ENCODE measurements at regions of chr10 and their contacts with region 1.

Region 1: DNA sequence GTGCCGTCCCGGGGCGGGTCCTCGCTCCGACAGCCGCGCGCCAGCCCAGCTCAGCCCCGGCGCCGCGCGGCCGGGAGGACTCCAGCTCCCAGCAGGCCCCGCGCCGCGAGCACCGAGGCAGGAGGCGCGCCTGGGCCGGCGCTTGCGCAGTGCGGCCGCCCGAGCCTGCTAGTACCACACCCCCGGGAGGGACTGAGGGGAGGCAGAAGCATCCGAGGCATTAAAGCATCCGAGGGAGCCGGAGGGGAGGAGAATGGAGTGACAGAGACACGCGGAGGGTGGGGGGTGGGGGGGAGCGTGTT is at the start of gene GRK5:
- DNase-seq: peak; percentile 96
- ATAC-seq: peak; percentile 86 to 91
- H3K4me3 ChIP-seq: peak within 1 kb of the TSS; percentile 66
- H3K27ac ChIP-seq: peak within 1 kb of the TSS; percentile 98 to 99
- H3K4me1 ChIP-seq: peaks cover 33% of the 10 kb centered on the region
- CTCF ChIP-seq: no peak
- EP300 ChIP-seq: no peak
- POLR2A ChIP-seq: peak; percentile 69
- RAD21 ChIP-seq: no peak
- polyA plus RNA-seq, gene GRK5: 5.0 and 5.4 TPM in 2 replicates

Region 2: GRCh38 chr10:118827466-118828155 is 379.7 kb before region 1 on chr10:
- CTCF ChIA-PET with region 1: no interaction called
- POLR2A ChIA-PET with region 1: no interaction called
- DNase-seq: no peak
- ATAC-seq: no peak
- H3K4me3 ChIP-seq: no peak overlapping the region
- H3K27ac ChIP-seq: no peak overlapping the region
- H3K4me1 ChIP-seq: no peaks in the 10 kb centered on the region
- CTCF ChIP-seq: 0 out of 3 replicates have a peak, but pooled peaks have one; percentile 16
- EP300 ChIP-seq: no peak
- POLR2A ChIP-seq: no peak
- RAD21 ChIP-seq: no peak

Region 3: GRCh38 chr10:119103903-119104652 is 103.2 kb before region 1 on chr10 and contains the start of gene DENND10:
- CTCF ChIA-PET with region 1: no interaction called
- POLR2A ChIA-PET with region 1: no interaction called
- DNase-seq: peak; percentile 79 to 86
- ATAC-seq: peak; percentile 86 to 92
- H3K4me3 ChIP-seq: peak within 1 kb of the TSS; percentile 86
- H3K27ac ChIP-seq: peak within 1 kb of the TSS; percentile 88 to 99
- H3K4me1 ChIP-seq: peaks cover 17% of the 10 kb centered on the region; the same call in 2 of the 3 replicates
- CTCF ChIP-seq: no peak
- EP300 ChIP-seq: no peak
- POLR2A ChIP-seq: peak; percentile 98
- RAD21 ChIP-seq: 0 out of 5 replicates have a peak, but pooled peaks of 1 of the 2 experiments have one; percentile 15
- polyA plus RNA-seq, gene DENND10: 88.6 and 94.3 TPM in 2 replicates

Region 4: GRCh38 chr10:119217991-119218490 is 10.7 kb after region 1 on chr10:
- CTCF ChIA-PET with region 1: interaction called, 14 read pairs
- POLR2A ChIA-PET with region 1: no interaction called
- DNase-seq: no peak
- ATAC-seq: no peak
- H3K4me3 ChIP-seq: no peak overlapping the region
- H3K27ac ChIP-seq: no peak overlapping the region
- H3K4me1 ChIP-seq: peaks cover 17% of the 10 kb centered on the region; the same call in 1 of the 3 replicates
- CTCF ChIP-seq: no peak
- EP300 ChIP-seq: no peak
- POLR2A ChIP-seq: no peak
- RAD21 ChIP-seq: no peak

Region 5: GRCh38 chr10:119270762-119271366 is 63.5 kb after region 1 on chr10:
- CTCF ChIA-PET with region 1: interaction called, 20 read pairs
- POLR2A ChIA-PET with region 1: interaction called, 12 read pairs
- DNase-seq: peak; percentile 50 to 72
- ATAC-seq: peak; percentile 87 to 90
- H3K4me3 ChIP-seq: peak overlapping the region; percentile 19; the same call in 1 of the 3 replicates
- H3K27ac ChIP-seq: peak overlapping the region; percentile 76 to 83
- H3K4me1 ChIP-seq: peaks cover 30% of the 10 kb centered on the region
- CTCF ChIP-seq: no peak
- EP300 ChIP-seq: no peak
- POLR2A ChIP-seq: no peak
- RAD21 ChIP-seq: no peak

Region 6: DNA sequence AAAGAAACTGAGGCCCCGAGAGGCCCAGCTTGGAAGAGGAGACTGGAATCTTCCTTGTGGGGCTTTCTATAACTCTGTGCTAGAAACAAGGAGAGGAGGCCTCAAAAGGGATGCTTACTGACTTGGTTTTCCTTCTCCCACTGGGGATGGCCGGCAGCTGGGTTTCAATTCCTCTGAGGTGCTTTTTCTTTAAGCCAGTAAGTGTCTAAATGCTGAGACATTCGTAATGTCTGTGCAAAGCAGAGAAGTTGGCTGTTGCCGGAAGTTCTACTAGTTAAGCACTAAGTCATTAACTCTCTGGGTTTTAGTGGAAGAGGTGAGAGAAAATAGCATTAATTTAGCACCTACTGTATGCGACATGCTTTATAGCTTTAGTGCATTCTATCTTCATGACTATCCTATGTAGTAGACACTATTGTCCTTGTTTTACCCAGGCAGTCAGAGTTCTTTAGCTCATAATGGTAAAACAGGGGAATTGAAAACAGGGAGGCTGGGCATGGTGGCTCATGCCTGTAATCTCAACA is 200.0 kb after region 1 on chr10:
- CTCF ChIA-PET with region 1: interaction called, 23 read pairs
- POLR2A ChIA-PET with region 1: interaction called, 9 read pairs
- DNase-seq: no peak
- ATAC-seq: no peak
- H3K4me3 ChIP-seq: no peak overlapping the region
- H3K27ac ChIP-seq: no peak overlapping the region
- H3K4me1 ChIP-seq: peaks cover 2% of the 10 kb centered on the region
- CTCF ChIP-seq: no peak
- EP300 ChIP-seq: no peak
- POLR2A ChIP-seq: no peak
- RAD21 ChIP-seq: no peak

Region 7: DNA sequence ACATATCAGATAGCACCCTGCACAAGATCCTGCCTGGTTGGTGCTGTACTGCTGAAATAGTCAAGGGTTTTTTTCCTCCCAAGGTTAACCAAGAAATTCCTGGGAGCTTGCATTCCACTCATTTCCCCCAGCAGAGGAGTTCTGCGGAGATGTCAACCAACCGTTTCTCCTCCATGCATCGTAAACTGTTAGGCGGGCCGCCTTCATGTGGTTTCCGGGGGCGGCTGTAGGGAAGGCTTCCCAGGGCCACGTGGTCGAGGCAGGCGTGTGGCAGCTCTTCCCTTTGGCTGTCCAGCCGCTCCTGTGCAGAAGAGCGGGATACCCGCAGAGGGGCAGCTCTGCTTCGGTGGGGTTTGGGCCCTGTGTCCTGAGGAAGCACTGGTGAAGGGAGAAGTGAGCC is 221.5 kb after region 1 on chr10:
- CTCF ChIA-PET with region 1: interaction called, 67 read pairs
- POLR2A ChIA-PET with region 1: no interaction called
- DNase-seq: no peak
- ATAC-seq: no peak
- H3K4me3 ChIP-seq: no peak overlapping the region
- H3K27ac ChIP-seq: no peak overlapping the region
- H3K4me1 ChIP-seq: no peaks in the 10 kb centered on the region
- CTCF ChIP-seq: no peak
- EP300 ChIP-seq: no peak
- POLR2A ChIP-seq: no peak
- RAD21 ChIP-seq: no peak

Region 8: DNA sequence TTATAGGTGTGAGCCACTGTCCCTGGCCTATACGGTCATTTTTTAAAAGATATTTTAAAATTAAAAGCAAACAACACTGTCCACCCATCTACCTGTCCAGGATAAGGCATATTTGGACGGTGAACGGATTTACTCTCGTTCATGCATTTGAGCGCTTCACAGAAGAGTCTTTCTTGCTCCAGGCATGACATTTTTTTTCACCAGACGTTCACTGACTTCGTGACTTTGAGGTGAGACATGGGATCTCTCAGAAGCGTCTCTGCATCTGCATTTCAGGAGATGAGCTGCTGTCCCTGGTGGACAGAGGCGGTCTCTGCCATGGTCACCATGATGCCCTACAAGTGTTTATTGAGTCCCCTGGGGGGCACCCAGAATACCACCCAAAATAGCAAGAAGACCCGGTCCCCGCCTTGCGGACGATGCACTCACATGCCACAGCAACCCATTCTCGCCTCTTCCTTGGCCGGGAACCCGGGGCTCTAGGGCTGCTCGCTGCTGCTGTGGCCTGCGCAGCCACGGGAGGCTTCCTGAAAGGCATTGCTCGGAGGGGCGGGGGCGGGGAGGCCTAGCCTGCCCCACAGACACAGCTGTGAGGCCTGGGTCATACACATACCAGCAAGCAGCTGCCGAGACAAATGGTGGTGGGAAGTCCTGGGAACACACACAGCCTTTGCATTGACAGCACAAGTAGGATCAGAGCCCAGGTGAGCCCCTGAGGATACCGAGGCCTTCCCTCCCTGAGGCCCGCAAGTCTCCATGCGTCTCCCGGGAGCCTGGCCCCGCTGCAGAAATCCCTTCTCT is 250.8 kb after region 1 on chr10:
- CTCF ChIA-PET with region 1: interaction called, 186 read pairs
- POLR2A ChIA-PET with region 1: no interaction called
- DNase-seq: no peak
- ATAC-seq: no peak
- H3K4me3 ChIP-seq: no peak overlapping the region
- H3K27ac ChIP-seq: no peak overlapping the region
- H3K4me1 ChIP-seq: no peaks in the 10 kb centered on the region
- CTCF ChIP-seq: no peak
- EP300 ChIP-seq: no peak
- POLR2A ChIP-seq: no peak
- RAD21 ChIP-seq: no peak

Region 9: DNA sequence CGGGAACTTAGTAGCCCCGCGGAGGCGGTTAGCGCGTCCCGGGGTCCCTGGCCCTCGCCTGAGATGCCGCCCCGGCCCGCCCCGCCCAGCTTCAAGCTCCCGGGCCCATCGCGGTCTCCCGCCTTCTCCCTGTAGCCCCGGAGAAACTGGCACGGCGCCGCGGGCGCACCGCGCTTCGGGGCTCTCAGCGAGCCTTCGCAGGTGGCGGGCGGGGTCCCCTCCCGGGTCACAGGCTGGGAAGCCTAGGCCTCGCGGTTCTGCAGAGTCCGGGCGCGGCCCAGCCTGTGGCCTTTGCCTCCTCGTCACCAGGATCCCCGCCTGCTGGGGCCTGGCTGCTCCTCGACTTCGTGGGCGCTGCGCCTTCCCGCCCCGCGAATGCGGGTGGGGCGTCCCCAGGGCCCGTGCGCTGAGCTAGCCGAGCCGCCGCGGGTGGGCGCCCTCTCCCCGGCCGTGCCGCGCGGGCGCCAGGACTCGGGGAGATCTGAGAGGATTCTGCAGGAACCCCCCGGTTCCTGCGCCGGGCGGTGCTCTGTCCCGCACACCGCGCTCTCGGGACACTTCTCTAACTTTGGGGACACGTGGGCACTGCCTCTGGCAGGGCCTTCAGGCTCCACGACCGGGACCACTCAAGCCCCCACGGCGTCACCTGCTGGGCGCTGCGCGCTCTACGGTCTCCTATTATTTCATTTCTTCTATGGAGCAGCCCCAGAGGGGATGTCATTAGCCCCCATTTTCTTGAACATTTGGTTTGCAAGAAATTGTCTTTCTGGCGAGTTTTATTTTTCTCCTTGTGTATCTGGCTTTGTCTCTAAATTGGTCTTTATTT is 335.9 kb after region 1 on chr10:
- CTCF ChIA-PET with region 1: interaction called, 17 read pairs
- POLR2A ChIA-PET with region 1: interaction called, 9 read pairs
- DNase-seq: peak; percentile 69 to 75
- ATAC-seq: peak; percentile 78 to 80
- H3K4me3 ChIP-seq: peak overlapping the region; percentile 78
- H3K27ac ChIP-seq: peak overlapping the region; percentile 95 to 98
- H3K4me1 ChIP-seq: peaks cover 20% of the 10 kb centered on the region
- CTCF ChIP-seq: peak; percentile 95
- EP300 ChIP-seq: no peak
- POLR2A ChIP-seq: peak; percentile 29; the same call in 1 of the 2 replicates
- RAD21 ChIP-seq: peak; percentile 41 to 61

Region 10: DNA sequence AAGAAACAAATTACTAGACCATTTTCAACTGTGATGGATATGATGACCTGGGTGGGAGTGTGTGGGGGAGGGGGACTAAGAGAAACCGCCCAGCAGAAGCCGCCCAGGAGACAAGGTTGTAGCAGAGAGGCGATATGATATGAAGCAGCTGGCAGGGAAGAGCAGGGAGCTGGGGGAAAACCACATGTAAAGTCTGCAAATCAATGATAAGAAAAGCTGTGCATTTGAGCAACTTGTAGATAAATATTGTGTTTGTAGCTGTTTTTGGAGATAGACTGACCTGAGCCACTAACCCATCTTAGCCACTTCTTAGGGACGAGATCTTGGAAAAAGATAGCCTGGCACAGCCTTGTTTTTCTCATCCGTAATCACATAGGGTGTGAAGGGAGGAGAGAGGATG is 937.8 kb after region 1 on chr10:
- CTCF ChIA-PET with region 1: no interaction called
- POLR2A ChIA-PET with region 1: no interaction called
- DNase-seq: no peak
- ATAC-seq: no peak
- H3K4me3 ChIP-seq: no peak overlapping the region
- H3K27ac ChIP-seq: no peak overlapping the region
- H3K4me1 ChIP-seq: no peaks in the 10 kb centered on the region
- CTCF ChIP-seq: no peak
- EP300 ChIP-seq: no peak
- POLR2A ChIP-seq: no peak
- RAD21 ChIP-seq: no peak